ENCODE measurements at regions of chr1 and their contacts with region 1.

Region 1: GRCh38 chr1:44775078-44775929 is at the start of gene RPS8:
- DNase-seq: peak; percentile 95
- ATAC-seq: peak; percentile 80
- H3K4me3 Mint-ChIP-seq: peak within 1 kb of the TSS; percentile 86
- H3K27ac Mint-ChIP-seq: peak within 1 kb of the TSS; percentile 97
- H3K4me1 Mint-ChIP-seq: peaks cover 33% of the 10 kb centered on the region
- H3K27me3 Mint-ChIP-seq: no peaks in the 10 kb centered on the region
- total RNA-seq, gene RPS8: 1,750 to 1,777 TPM

Region 2: DNA sequence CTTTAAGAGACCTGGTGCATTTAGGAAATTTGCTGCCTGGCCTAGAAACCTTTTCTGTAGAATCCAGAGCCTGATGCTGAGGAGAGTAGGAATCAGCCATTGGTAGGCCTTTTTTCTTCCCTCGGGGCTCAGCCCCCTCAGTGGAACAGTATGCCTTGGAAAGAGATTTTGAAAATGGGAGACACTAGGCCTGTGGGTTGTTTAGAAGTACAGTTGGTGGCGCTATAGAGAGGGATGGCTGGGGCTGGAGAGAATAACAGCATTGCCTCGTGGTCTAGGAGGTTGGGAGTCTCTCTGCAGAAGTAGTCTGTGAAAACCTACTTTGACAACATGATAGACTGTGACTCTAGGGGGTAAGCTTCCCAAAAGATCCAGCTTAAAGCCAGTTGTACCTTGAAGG is 27.4 kb before region 1 on chr1:
- CTCF ChIA-PET with region 1: no interaction called
- POLR2A ChIA-PET with region 1: interaction called, 14 read pairs
- DNase-seq: no peak
- ATAC-seq: no peak
- H3K4me3 Mint-ChIP-seq: no peak overlapping the region
- H3K27ac Mint-ChIP-seq: no peak overlapping the region
- H3K4me1 Mint-ChIP-seq: peaks cover 32% of the 10 kb centered on the region
- H3K27me3 Mint-ChIP-seq: no peaks in the 10 kb centered on the region

Region 3: GRCh38 chr1:44786138-44786840 is 11.0 kb after region 1 on chr1:
- CTCF ChIA-PET with region 1: interaction called, 11 read pairs
- POLR2A ChIA-PET with region 1: interaction called, 25 read pairs
- DNase-seq: peak; percentile 82
- ATAC-seq: peak; percentile 64
- H3K4me3 Mint-ChIP-seq: peak overlapping the region; percentile 64
- H3K27ac Mint-ChIP-seq: peak overlapping the region; percentile 74
- H3K4me1 Mint-ChIP-seq: peaks cover 42% of the 10 kb centered on the region
- H3K27me3 Mint-ChIP-seq: no peaks in the 10 kb centered on the region

Region 4: DNA sequence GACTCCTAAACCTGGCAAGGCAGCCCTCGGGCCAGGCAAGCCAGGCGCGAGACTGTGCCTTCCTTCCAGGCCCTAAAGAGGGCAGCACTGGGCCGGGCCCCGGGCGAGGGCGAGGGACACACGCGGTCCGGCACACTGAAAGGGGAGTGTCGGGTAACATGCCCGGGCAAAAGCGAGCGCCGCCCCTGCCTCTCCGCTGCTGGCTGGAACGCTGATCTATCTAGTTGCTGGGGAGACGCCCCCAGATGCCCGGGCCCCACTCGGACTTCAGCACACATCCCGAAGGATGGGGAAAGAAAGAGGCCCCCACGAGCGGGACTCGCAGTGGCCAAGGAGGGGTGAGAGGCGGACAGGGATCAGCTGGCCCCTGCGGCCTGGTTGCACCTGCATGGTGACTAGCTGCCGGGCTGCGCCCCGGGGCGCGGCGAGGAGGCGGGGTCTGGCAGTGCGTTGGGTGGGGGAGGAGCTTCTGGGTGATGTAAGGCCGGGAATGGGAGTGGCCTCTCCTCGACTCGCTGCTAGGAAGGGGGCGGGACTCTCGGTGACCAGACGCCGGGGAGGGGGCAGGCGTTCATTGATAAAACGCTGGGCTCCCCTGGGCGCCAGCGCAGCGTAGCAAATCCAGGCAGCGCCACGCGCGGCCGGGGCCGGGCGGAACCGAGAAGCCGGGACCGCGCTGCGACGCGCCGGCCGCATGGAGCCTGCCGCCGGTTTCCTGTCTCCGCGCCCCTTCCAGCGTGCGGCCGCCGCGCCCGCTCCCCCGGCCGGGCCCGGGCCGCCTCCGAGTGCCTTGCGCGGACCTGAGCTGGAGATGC is 24.7 kb after region 1 on chr1 and contains the start of gene PLK3:
- CTCF ChIA-PET with region 1: interaction called, 4 read pairs
- POLR2A ChIA-PET with region 1: interaction called, 15 read pairs
- DNase-seq: peak; percentile 99
- ATAC-seq: peak; percentile 77
- H3K4me3 Mint-ChIP-seq: peak within 1 kb of the TSS; percentile 96
- H3K27ac Mint-ChIP-seq: peak within 1 kb of the TSS; percentile 100
- H3K4me1 Mint-ChIP-seq: peaks cover 42% of the 10 kb centered on the region
- H3K27me3 Mint-ChIP-seq: no peaks in the 10 kb centered on the region
- total RNA-seq, gene PLK3: 64.8 to 68.0 TPM

Region 5: GRCh38 chr1:44853201-44853600 is 77.9 kb after region 1 on chr1:
- CTCF ChIA-PET with region 1: no interaction called
- POLR2A ChIA-PET with region 1: no interaction called
- DNase-seq: no peak
- ATAC-seq: no peak
- H3K4me3 Mint-ChIP-seq: no peak overlapping the region
- H3K27ac Mint-ChIP-seq: no peak overlapping the region
- H3K4me1 Mint-ChIP-seq: no peaks in the 10 kb centered on the region
- H3K27me3 Mint-ChIP-seq: no peaks in the 10 kb centered on the region